Natural killer cell (primary cell): ENCODE measurements at regions of chr18 and their contacts with region 1.

Region 1: GRCh38 chr18:69935319-69936190 is 12.1 kb downstream of the CD226 start:
- DNase-seq: peak; percentile 87 to 92
- ATAC-seq: peak; percentile 89 to 96 (median 95)
- H3K4me3 ChIP-seq: no peak overlapping the region
- H3K4me3 Mint-ChIP-seq: no peak overlapping the region
- H3K27ac ChIP-seq: peak overlapping the region; percentile 72
- H3K27ac Mint-ChIP-seq: no peak overlapping the region
- H3K4me1 ChIP-seq: peaks cover 34% of the 10 kb centered on the region
- H3K4me1 Mint-ChIP-seq: peaks cover 16 to 20% of the 10 kb centered on the region in 2 donors
- H3K27me3 ChIP-seq: no peaks in the 10 kb centered on the region
- H3K27me3 Mint-ChIP-seq: no peaks in the 10 kb centered on the region
- CTCF ChIP-seq: no peak

Region 2: GRCh38 chr18:69723434-69723833 is 212.1 kb before region 1 on chr18:
- intact Hi-C with region 1: loop called (anchors 5 kb)
- DNase-seq: peak in 1 of 2 donors; percentile 2
- ATAC-seq: peak; percentile 82 to 91 (median 89)
- H3K4me3 ChIP-seq: no peak overlapping the region
- H3K4me3 Mint-ChIP-seq: peak overlapping the region; percentile 71
- H3K27ac ChIP-seq: peak overlapping the region; percentile 55
- H3K27ac Mint-ChIP-seq: peak overlapping the region; percentile 81 to 87
- H3K4me1 ChIP-seq: peaks cover 4% of the 10 kb centered on the region
- H3K4me1 Mint-ChIP-seq: peaks cover 18 to 23% of the 10 kb centered on the region in 2 donors
- H3K27me3 ChIP-seq: no peaks in the 10 kb centered on the region
- H3K27me3 Mint-ChIP-seq: no peaks in the 10 kb centered on the region
- CTCF ChIP-seq: no peak

Region 3: DNA sequence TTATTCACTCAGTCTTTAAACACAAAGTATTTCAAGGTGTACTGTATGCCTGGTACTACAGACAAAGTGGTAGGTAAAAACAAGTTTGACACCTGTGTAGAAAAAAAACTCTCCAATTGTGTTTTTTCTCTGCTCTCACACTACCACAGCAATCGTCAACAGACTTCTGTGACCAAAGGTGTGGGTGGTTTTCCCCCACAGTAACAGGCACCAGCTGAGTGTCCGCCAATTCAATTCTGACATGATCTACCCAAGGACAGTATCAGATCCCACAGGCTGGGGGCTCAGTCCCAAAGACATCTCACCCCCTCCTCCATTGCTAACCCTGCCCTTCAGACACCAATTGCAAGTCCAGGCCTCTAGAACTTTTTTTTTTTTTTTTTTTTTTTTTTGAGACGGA is 59.1 kb before region 1 on chr18:
- intact Hi-C with region 1: loop called (anchors 1 kb)
- DNase-seq: peak; percentile 37 to 40
- ATAC-seq: peak; percentile 81 to 92 (median 81)
- H3K4me3 ChIP-seq: no peak overlapping the region
- H3K4me3 Mint-ChIP-seq: peak overlapping the region; percentile 43
- H3K27ac ChIP-seq: peak overlapping the region; percentile 36
- H3K27ac Mint-ChIP-seq: peak overlapping the region; percentile 85 to 87
- H3K4me1 ChIP-seq: peaks cover 44% of the 10 kb centered on the region
- H3K4me1 Mint-ChIP-seq: peaks cover 81 to 83% of the 10 kb centered on the region in 2 donors
- H3K27me3 ChIP-seq: no peaks in the 10 kb centered on the region
- H3K27me3 Mint-ChIP-seq: no peaks in the 10 kb centered on the region
- CTCF ChIP-seq: no peak

Region 4: GRCh38 chr18:69897397-69898108 is 38.0 kb before region 1 on chr18:
- intact Hi-C with region 1: loop called (anchors 1 kb)
- DNase-seq: peak in 1 of 2 donors; percentile 80
- ATAC-seq: peak; percentile 27 to 53 (median 46)
- H3K4me3 ChIP-seq: peak overlapping the region; percentile 33
- H3K4me3 Mint-ChIP-seq: peak overlapping the region; percentile 94
- H3K27ac ChIP-seq: peak overlapping the region; percentile 92
- H3K27ac Mint-ChIP-seq: peak overlapping the region; percentile 75 to 93
- H3K4me1 ChIP-seq: peaks cover 46% of the 10 kb centered on the region
- H3K4me1 Mint-ChIP-seq: peaks cover 62 to 76% of the 10 kb centered on the region in 2 donors
- H3K27me3 ChIP-seq: no peaks in the 10 kb centered on the region
- H3K27me3 Mint-ChIP-seq: no peaks in the 10 kb centered on the region
- CTCF ChIP-seq: no peak

Region 5: GRCh38 chr18:69948919-69949537 is 13.5 kb after region 1 on chr18:
- intact Hi-C with region 1: loop called (anchors 1 kb)
- DNase-seq: peak in 1 of 2 donors; percentile 59
- ATAC-seq: peak; percentile 58 to 72 (median 70)
- H3K4me3 ChIP-seq: no peak overlapping the region
- H3K4me3 Mint-ChIP-seq: no peak overlapping the region
- H3K27ac ChIP-seq: peak overlapping the region; percentile 55
- H3K27ac Mint-ChIP-seq: no peak overlapping the region
- H3K4me1 ChIP-seq: peaks cover 17% of the 10 kb centered on the region
- H3K4me1 Mint-ChIP-seq: no peaks in the 10 kb centered on the region
- H3K27me3 ChIP-seq: no peaks in the 10 kb centered on the region
- H3K27me3 Mint-ChIP-seq: no peaks in the 10 kb centered on the region
- CTCF ChIP-seq: no peak